ENCODE measurements at regions of chr1 and their contacts with region 1.

Region 1: GRCh38 chr1:70239940-70240339 is 18.8 kb downstream of the SRSF11 start:
- DNase-seq: no peak
- ATAC-seq: no peak
- H3K4me3 ChIP-seq: no peak overlapping the region
- H3K27ac ChIP-seq: no peak overlapping the region
- H3K4me1 ChIP-seq: peaks cover 5% of the 10 kb centered on the region
- H3K27me3 ChIP-seq: no peaks in the 10 kb centered on the region
- CTCF ChIP-seq: no peak

Region 2: DNA sequence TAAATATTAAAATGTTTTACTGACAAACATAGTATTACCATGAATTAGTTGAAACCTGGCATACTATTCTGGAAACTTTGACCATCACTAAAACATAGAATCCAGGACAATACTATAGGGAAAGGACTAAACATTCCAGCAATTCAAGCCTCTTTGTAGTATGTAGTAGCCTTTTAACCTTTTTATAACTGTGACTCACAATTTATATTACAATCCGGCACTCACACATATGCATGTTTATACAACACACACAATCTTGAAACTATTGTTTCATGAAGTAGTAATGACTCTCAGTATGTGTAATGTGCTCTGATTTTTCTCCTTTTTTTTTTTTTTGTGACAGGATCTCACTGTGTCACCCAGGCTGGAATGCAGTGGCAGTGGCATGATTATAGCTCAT is 50.3 kb after region 1 on chr1:
- intact Hi-C with region 1: loop called in 1 of 2 experiments (anchors 5 kb)
- DNase-seq: no peak
- ATAC-seq: no peak
- H3K4me3 ChIP-seq: no peak overlapping the region
- H3K27ac ChIP-seq: no peak overlapping the region
- H3K4me1 ChIP-seq: no peaks in the 10 kb centered on the region
- H3K27me3 ChIP-seq: no peaks in the 10 kb centered on the region
- CTCF ChIP-seq: no peak